SK-N-SH (cell line): ENCODE measurements at regions of chr2 and their contacts with region 1.

Region 1: DNA sequence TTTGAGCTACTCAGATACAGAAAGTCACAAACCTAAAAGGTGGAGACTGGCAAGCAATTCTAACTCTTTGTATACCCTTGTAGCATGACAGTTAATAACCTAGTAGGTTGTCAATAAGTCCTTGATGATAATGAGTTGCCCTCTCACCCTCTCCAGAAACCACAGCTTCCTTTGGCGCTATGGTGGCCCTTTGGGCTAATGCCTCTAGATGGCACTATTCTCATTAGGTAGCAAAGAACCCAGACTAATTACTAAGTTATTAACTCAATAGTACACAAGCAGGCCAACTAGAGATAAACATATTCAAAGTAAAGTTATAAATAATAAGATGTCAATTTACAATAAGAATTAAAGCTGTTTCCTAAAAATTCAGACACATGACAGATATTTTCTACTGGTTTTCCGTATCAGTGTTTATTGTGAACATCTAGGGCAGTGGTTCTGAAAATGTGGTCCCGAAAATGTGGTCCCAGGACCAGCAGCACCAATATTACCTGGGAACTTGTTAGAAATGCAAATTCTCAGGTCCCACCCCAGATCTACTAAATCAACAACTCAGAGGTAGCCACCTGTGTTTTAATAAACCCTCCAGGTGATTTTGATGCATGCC is 41.1 kb downstream of the LDAH start:
- DNase-seq: peak; percentile 50
- H3K4me3 ChIP-seq: no peak overlapping the region; a peak in 1 of 4 replicates
- H3K27ac ChIP-seq: no peak overlapping the region
- H3K4me1 ChIP-seq: no peaks in the 10 kb centered on the region; a peak in 1 of 4 replicates
- H3K27me3 ChIP-seq: no peaks in the 10 kb centered on the region
- CTCF ChIP-seq: peak; percentile 91
- EP300 ChIP-seq: no peak
- RAD21 ChIP-seq: peak; percentile 83

Region 2: DNA sequence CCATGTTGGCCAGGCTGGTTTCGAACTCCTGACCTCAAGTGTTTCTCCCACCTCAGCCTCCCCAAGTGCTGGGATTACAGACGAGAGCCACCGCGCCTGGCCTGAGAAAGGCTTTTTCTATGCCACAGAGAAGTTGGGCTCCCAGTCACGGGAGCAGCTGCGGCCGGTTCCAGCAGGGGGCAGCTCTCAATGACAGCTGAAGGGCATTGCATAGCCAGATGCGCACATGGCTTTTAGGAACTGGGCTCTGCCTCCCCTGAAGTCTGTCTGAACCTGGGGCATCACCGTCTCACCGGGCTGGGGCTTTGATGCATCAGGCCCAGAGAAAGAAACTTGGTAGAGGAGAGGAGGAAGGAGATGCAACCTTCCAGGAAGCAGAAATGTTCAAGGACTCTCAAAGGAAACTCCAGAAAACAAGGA is 646.1 kb before region 1 on chr2:
- CTCF ChIA-PET with region 1: no interaction called
- POLR2A ChIA-PET with region 1: no interaction called
- DNase-seq: peak; percentile 89
- H3K4me3 ChIP-seq: no peak overlapping the region; a peak in 1 of 4 replicates
- H3K27ac ChIP-seq: no peak overlapping the region
- H3K4me1 ChIP-seq: peaks cover 0 to 34% of the 10 kb centered on the region in 2 experiments; a peak in 1 of 4 replicates
- H3K27me3 ChIP-seq: no peaks in the 10 kb centered on the region
- CTCF ChIP-seq: peak; percentile 98
- EP300 ChIP-seq: no peak
- RAD21 ChIP-seq: peak; percentile 84

Region 3: GRCh38 chr2:20231632-20232031 is 550.1 kb before region 1 on chr2:
- CTCF ChIA-PET with region 1: no interaction called
- POLR2A ChIA-PET with region 1: no interaction called
- DNase-seq: peak; percentile 33
- H3K4me3 ChIP-seq: no peak overlapping the region
- H3K27ac ChIP-seq: no peak overlapping the region
- H3K4me1 ChIP-seq: no peaks in the 10 kb centered on the region; a peak in 2 of 4 replicates
- H3K27me3 ChIP-seq: no peaks in the 10 kb centered on the region
- CTCF ChIP-seq: no peak
- EP300 ChIP-seq: peak in 1 of 2 experiments; percentile 28; a peak in 1 of 4 replicates
- RAD21 ChIP-seq: no peak

Region 4: GRCh38 chr2:20561701-20562454 is 219.9 kb before region 1 on chr2:
- CTCF ChIA-PET with region 1: no interaction called
- POLR2A ChIA-PET with region 1: no interaction called
- DNase-seq: no peak
- H3K4me3 ChIP-seq: no peak overlapping the region
- H3K27ac ChIP-seq: peak overlapping the region in 1 of 2 experiments; percentile 41; a peak in 1 of 4 replicates
- H3K4me1 ChIP-seq: peaks cover 30 to 52% of the 10 kb centered on the region in 2 experiments; a peak in 3 of 4 replicates
- H3K27me3 ChIP-seq: no peaks in the 10 kb centered on the region
- CTCF ChIP-seq: no peak
- EP300 ChIP-seq: peak in 1 of 2 experiments; percentile 83; a peak in 1 of 4 replicates
- RAD21 ChIP-seq: no peak

Region 5: GRCh38 chr2:20758997-20759396 is 22.8 kb before region 1 on chr2:
- CTCF ChIA-PET with region 1: interaction called, 66 read pairs
- POLR2A ChIA-PET with region 1: no interaction called
- DNase-seq: no peak
- H3K4me3 ChIP-seq: no peak overlapping the region
- H3K27ac ChIP-seq: no peak overlapping the region
- H3K4me1 ChIP-seq: no peaks in the 10 kb centered on the region
- H3K27me3 ChIP-seq: no peaks in the 10 kb centered on the region
- CTCF ChIP-seq: no peak
- EP300 ChIP-seq: no peak
- RAD21 ChIP-seq: no peak

Region 6: DNA sequence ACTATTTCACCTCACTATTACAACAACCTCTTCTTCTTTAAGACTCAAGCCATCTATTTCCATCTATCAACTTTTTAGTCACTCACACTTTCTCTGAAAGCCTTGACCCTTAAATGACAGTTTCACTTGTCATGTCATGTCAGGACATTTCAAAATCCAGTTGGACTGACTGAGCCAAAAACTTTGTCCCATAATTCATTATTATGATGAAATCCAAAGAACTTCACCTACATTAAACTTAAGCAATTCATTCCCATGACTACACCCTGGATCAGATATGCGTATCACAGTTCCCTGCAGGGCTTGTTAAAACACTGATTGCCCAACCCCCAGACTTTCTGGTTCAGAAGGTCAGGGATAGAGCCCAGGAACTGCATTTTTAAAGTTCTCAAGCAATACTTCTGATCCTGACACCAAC is 14.6 kb after region 1 on chr2:
- CTCF ChIA-PET with region 1: interaction called, 35 read pairs
- POLR2A ChIA-PET with region 1: no interaction called
- DNase-seq: no peak
- H3K4me3 ChIP-seq: no peak overlapping the region
- H3K27ac ChIP-seq: no peak overlapping the region
- H3K4me1 ChIP-seq: no peaks in the 10 kb centered on the region
- H3K27me3 ChIP-seq: no peaks in the 10 kb centered on the region
- CTCF ChIP-seq: no peak
- EP300 ChIP-seq: no peak
- RAD21 ChIP-seq: no peak

Region 7: GRCh38 chr2:20812779-20813178 is 31.0 kb after region 1 on chr2:
- CTCF ChIA-PET with region 1: interaction called, 11 read pairs
- POLR2A ChIA-PET with region 1: no interaction called
- DNase-seq: no peak
- H3K4me3 ChIP-seq: no peak overlapping the region
- H3K27ac ChIP-seq: no peak overlapping the region
- H3K4me1 ChIP-seq: no peaks in the 10 kb centered on the region
- H3K27me3 ChIP-seq: no peaks in the 10 kb centered on the region
- CTCF ChIP-seq: no peak
- EP300 ChIP-seq: no peak
- RAD21 ChIP-seq: no peak

Region 8: GRCh38 chr2:20953145-20953824 is 171.5 kb after region 1 on chr2:
- CTCF ChIA-PET with region 1: interaction called, 127 read pairs
- POLR2A ChIA-PET with region 1: no interaction called
- DNase-seq: no peak
- H3K4me3 ChIP-seq: no peak overlapping the region
- H3K27ac ChIP-seq: no peak overlapping the region
- H3K4me1 ChIP-seq: peaks cover 0 to 3% of the 10 kb centered on the region in 2 experiments; a peak in 1 of 4 replicates
- H3K27me3 ChIP-seq: no peaks in the 10 kb centered on the region
- CTCF ChIP-seq: no peak
- EP300 ChIP-seq: no peak
- RAD21 ChIP-seq: no peak

Region 9: GRCh38 chr2:20970068-20970467 is 188.3 kb after region 1 on chr2:
- CTCF ChIA-PET with region 1: interaction called, 127 read pairs
- POLR2A ChIA-PET with region 1: no interaction called
- DNase-seq: no peak
- H3K4me3 ChIP-seq: no peak overlapping the region
- H3K27ac ChIP-seq: no peak overlapping the region
- H3K4me1 ChIP-seq: no peaks in the 10 kb centered on the region; a peak in 1 of 4 replicates
- H3K27me3 ChIP-seq: peaks cover 14% of the 10 kb centered on the region; the same call in 1 of the 2 replicates
- CTCF ChIP-seq: no peak
- EP300 ChIP-seq: no peak
- RAD21 ChIP-seq: no peak